Activated CD4-positive, alpha-beta T cell treated with anti-CD3 and anti-CD28 coated beads, Interleukin-2, amount 10 ng/mL, durations not matched to agents 24 days and 14 days (primary cell): ENCODE measurements at regions of chr17 and their contacts with region 1.

Region 1: GRCh38 chr17:56679115-56679766 is 85.7 kb downstream of the NOG start:
- DNase-seq: peak; percentile 70
- H3K4me3 Mint-ChIP-seq: peak overlapping the region; percentile 43
- H3K27ac Mint-ChIP-seq: no peak overlapping the region
- H3K4me1 Mint-ChIP-seq: peaks cover 18% of the 10 kb centered on the region
- H3K27me3 Mint-ChIP-seq: peaks cover 45% of the 10 kb centered on the region

Region 2: GRCh38 chr17:56727876-56728620 is 48.8 kb after region 1 on chr17:
- intact Hi-C with region 1: no loop called
- DNase-seq: no peak
- H3K4me3 Mint-ChIP-seq: no peak overlapping the region
- H3K27ac Mint-ChIP-seq: no peak overlapping the region
- H3K4me1 Mint-ChIP-seq: no peaks in the 10 kb centered on the region
- H3K27me3 Mint-ChIP-seq: peaks cover 8% of the 10 kb centered on the region

Region 3: DNA sequence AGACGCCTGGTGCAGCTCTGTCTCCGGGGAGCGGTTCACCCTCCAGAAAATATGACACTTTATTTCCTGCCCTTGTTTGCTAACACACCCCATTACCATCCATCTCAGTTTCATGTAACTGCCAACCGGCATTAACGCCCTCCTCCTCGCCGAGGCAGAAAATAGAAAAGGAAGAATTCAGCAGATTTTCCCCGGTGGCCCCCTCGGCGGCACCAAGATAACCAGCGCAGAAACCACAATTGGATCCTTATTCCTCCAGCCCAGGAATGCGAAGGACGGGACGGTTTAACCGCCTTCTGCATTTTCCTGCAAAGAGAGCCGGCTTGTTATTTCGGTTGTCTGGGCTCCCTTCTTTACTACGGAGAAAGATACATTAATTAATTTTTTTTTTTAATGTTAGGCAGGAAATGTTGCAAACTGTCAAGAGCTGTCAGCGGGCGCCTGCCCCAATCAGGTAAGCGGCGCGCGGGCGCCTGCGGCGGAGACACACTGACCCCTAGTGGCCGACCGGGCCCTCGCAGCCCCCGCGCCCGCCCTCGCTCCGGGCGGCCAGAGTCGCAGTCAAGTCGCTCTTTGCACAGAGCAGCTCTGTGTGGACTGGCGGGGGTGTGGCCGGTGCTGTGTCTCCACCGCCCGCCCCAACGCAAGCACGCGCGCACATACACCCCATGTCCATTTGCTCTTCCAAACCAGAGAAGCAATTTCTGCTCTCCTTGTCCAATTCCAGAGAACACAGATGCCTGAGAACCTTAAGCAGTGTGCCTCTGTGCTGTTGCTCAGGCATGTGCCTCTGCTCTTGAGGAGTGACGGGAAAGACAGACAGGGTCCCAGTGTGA is 100.9 kb after region 1 on chr17:
- intact Hi-C with region 1: loop called (anchors 2 kb)
- DNase-seq: peak; percentile 97
- H3K4me3 Mint-ChIP-seq: peak overlapping the region; percentile 89
- H3K27ac Mint-ChIP-seq: peak overlapping the region; percentile 86
- H3K4me1 Mint-ChIP-seq: peaks cover 33% of the 10 kb centered on the region
- H3K27me3 Mint-ChIP-seq: peaks cover 4% of the 10 kb centered on the region